Dorsolateral prefrontal cortex (tissue), 120 donors: ENCODE measurements at regions of chr3 and their contacts with region 1.

Region 1: GRCh38 chr3:68876112-68876713 is 56.1 kb downstream of the TAFA4 start:
- DNase-seq: peak in 3 of 10 donors; percentile 9 to 57 (median 35)
- H3K4me3 ChIP-seq: no peak overlapping the region
- H3K27ac ChIP-seq: no peak overlapping the region
- H3K27me3 ChIP-seq: no peaks in the 10 kb centered on the region
- CTCF ChIP-seq: peak; percentile 77 to 96 (median 92)

Region 2: DNA sequence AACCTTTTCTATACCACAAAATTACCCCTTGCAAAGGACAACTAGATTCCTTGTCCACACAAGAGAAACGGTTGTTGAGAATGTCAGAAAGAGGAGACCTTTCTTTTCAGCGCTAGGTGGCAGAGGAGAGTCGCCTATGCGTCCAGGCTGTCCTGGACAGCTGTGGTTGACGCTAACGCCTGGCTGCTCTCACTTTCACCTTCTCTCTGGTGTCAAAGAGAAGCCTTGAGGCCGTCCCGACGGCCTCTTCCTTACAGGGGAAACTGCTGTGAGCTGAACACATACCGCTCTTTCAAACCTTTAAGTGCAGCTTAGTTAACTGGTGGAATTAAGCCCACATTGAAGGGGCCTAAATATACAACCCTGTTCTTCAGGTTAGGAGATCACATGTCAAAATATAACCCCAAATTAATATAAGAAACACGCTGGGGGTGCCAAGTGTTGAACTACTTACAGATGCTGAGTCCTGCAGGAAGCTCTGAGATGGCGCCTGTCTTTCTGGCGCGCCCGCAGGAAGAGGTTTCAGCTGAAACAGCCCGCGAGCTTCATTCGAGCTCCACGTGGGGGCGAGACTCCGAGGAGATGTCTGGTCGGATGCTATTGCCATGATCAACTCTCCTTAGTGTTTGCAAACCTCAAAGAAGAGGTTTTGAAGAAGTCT is 1904.2 kb before region 1 on chr3:
- intact Hi-C with region 1: loop called in 1 of 2 experiments (anchors 10 kb)
- DNase-seq: peak; percentile 27 to 76 (median 64)
- H3K4me3 ChIP-seq: peak overlapping the region; percentile 7 to 66 (median 44)
- H3K27ac ChIP-seq: peak overlapping the region in 13 of 59 donors; percentile 3 to 63 (median 24)
- H3K27me3 ChIP-seq: no peaks in the 10 kb centered on the region
- CTCF ChIP-seq: peak; percentile 36 to 91 (median 79)

Region 3: GRCh38 chr3:67113802-67114407 is 1762.3 kb before region 1 on chr3:
- intact Hi-C with region 1: loop called (anchors 5 kb)
- DNase-seq: peak; percentile 37 to 95 (median 82)
- H3K4me3 ChIP-seq: no peak overlapping the region
- H3K27ac ChIP-seq: no peak overlapping the region
- H3K27me3 ChIP-seq: no peaks in the 10 kb centered on the region
- CTCF ChIP-seq: peak; percentile 75 to 94 (median 88)

Region 4: GRCh38 chr3:67384760-67385397 is 1491.3 kb before region 1 on chr3:
- intact Hi-C with region 1: loop called (anchors 2 to 10 kb)
- DNase-seq: peak in 6 of 10 donors; percentile 18 to 52 (median 42)
- H3K4me3 ChIP-seq: no peak overlapping the region
- H3K27ac ChIP-seq: no peak overlapping the region
- H3K27me3 ChIP-seq: no peaks in the 10 kb centered on the region
- CTCF ChIP-seq: peak in 54 of 56 donors; percentile 25 to 66 (median 52)

Region 5: DNA sequence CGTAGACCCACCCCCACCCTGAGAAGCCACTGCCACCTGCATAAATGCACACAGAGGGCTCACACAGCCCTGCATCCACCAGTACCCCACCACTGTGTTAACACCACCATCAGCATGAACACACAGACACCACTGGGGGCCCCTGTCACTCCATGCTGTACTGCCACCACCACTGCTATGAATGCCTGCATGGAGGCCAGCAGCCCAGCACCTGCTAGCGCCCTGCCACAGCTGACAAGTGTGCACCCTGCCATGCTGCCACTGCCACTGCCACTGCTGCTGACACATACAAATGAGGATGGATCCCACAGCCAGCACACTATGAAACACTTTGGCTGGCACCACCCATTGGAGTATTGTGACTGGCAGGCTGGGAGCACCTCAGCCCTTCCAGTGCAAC is 304.9 kb before region 1 on chr3:
- intact Hi-C with region 1: no loop called
- DNase-seq: no peak
- H3K4me3 ChIP-seq: no peak overlapping the region
- H3K27ac ChIP-seq: no peak overlapping the region
- H3K27me3 ChIP-seq: no peaks in the 10 kb centered on the region
- CTCF ChIP-seq: no peak

Region 6: GRCh38 chr3:69110941-69111546 is 234.8 kb after region 1 on chr3:
- intact Hi-C with region 1: no loop called
- DNase-seq: no peak
- H3K4me3 ChIP-seq: no peak overlapping the region
- H3K27ac ChIP-seq: peak overlapping the region in 15 of 59 donors; percentile 4 to 97 (median 21)
- H3K27me3 ChIP-seq: no peaks in the 10 kb centered on the region
- CTCF ChIP-seq: no peak